AG04450 (cell line): ENCODE measurements at regions of chr6 and their contacts with region 1.

Region 1: GRCh38 chr6:31729515-31729978 is 448 bp upstream of the DDAH2 start:
- DNase-seq: peak; percentile 51
- H3K4me3 ChIP-seq: peak overlapping the region; percentile 90
- H3K27ac ChIP-seq: peak overlapping the region; percentile 90
- H3K27me3 ChIP-seq: no peaks in the 10 kb centered on the region
- CTCF ChIP-seq: peak; percentile 52

Region 2: DNA sequence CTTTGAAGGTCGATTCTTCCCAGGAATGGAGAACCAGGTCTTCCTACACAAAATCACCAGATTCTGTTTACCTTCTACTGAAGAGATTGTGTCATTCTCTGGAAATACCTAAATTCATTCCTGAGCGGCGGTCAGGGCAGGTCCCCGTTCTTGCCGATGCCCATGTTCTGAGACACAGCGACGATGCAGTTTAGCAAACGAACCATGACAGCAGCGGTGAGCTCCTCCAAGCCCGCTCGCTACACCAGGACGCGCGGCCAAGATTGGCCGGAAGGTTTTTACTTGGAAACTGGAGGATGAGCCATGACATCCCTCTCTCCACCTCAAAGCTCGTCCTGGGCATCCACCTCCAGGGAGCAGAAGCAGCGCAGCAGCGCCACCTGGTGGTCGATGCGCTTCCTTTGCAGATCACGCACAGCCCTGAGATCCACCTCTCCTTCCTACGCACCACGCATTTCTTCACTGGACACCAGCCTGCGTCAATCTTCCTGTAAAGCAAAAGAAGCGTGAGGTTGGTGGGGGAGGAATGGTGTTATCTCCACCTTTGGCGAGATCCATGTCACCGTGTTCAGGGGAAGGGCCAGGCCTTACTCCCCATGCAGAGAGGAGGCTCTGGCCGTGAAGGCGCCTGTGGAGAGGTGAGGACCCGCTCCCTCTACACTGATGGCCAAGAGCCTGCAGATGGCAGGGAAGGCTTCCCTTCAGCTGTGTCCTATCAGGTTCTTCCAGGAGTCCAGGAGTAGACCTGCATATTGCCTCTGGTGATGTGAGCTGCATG is 362.7 kb before region 1 on chr6:
- CTCF ChIA-PET with region 1: no interaction called
- POLR2A ChIA-PET with region 1: no interaction called
- DNase-seq: peak; percentile 74
- H3K4me3 ChIP-seq: peak overlapping the region; percentile 42
- H3K27ac ChIP-seq: no peak overlapping the region
- H3K27me3 ChIP-seq: peaks cover 29% of the 10 kb centered on the region
- CTCF ChIP-seq: peak; percentile 96

Region 3: DNA sequence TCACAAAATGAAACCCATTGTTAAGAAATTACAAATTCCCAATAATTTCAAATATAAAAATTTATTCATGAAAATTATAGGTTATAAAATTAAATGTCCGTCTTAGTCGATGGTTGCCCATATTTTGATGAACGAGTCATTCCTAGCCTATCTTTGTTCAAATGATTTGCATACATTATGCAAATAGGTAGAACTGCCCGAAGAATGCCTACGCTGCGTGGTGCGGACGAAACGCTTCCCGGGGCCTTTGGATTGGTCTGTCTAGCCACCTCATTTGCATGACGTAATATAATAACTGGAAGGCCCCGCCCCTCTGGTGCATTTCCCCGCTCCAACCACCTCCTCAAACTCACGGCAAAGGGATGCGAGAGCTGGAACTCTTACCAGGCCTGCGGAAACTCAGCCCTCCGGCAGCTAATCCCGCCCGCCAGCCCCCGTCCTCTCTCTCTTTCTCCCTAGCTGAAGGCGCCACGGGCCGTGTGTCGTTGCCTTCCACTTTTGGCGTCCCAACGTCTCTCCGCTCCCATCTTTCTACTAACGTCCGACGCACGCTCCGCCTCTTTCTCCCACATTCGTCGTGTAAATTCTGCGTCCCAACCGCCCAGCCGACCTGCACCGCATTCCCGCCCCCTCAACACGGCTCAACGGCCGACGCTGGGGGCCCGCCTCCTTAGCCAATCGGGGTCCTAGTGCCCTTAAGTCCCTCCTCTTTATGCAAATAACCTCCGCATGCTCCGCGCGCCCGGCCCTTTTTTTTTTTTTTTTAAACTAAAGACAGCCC is 109.6 kb before region 1 on chr6:
- CTCF ChIA-PET with region 1: interaction called, 11 read pairs
- POLR2A ChIA-PET with region 1: no interaction called
- DNase-seq: peak; percentile 98
- H3K4me3 ChIP-seq: peak overlapping the region; percentile 82
- H3K27ac ChIP-seq: peak overlapping the region; percentile 100
- H3K27me3 ChIP-seq: no peaks in the 10 kb centered on the region
- CTCF ChIP-seq: no peak

Region 4: DNA sequence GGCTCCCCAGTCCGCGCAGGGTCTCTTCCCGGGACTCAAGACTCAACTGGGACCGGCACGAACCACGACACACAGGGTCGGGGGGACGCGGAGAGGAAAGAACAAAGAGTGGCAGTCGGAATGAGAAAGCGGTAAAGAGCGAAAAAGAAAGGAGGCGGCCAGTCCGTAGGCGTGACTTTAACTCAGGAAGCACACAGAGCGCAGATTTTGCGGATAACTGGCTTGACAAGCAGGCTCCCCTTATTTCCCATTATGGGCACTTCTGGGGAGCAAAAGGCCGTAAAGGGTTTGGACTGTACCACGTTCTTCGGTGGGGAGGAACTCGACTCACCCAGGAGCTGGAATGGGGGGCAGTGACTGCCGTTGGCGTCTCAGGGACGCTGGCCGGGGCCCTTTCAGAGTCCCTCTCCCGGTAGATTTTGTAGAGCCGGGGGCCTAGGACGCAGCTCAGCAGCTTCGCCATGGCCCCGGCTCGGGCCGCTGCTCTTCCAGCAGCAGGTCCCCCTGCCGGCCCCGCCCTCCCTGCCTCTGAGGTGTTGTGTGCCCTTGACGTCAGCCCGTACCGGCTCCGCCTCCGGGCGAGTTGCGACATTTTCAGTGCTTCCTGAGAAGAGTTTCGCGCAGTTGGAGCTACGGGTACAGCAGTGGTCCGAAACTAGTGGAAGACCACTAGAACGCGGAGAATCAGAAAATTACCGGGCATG is 26.6 kb before region 1 on chr6 and contains the start of gene ABHD16A:
- CTCF ChIA-PET with region 1: interaction called, 10 read pairs
- POLR2A ChIA-PET with region 1: interaction called, 5 read pairs
- DNase-seq: peak; percentile 95
- H3K4me3 ChIP-seq: peak within 1 kb of the TSS; percentile 98
- H3K27ac ChIP-seq: peak within 1 kb of the TSS; percentile 94
- H3K27me3 ChIP-seq: no peaks in the 10 kb centered on the region
- CTCF ChIP-seq: no peak
- polyA plus RNA-seq, gene ABHD16A: 34.0 and 36.3 TPM in 2 replicates